Posterior cingulate gyrus (tissue), 11 donors: ENCODE measurements at regions of chr7 and their contacts with region 1.

Region 1: DNA sequence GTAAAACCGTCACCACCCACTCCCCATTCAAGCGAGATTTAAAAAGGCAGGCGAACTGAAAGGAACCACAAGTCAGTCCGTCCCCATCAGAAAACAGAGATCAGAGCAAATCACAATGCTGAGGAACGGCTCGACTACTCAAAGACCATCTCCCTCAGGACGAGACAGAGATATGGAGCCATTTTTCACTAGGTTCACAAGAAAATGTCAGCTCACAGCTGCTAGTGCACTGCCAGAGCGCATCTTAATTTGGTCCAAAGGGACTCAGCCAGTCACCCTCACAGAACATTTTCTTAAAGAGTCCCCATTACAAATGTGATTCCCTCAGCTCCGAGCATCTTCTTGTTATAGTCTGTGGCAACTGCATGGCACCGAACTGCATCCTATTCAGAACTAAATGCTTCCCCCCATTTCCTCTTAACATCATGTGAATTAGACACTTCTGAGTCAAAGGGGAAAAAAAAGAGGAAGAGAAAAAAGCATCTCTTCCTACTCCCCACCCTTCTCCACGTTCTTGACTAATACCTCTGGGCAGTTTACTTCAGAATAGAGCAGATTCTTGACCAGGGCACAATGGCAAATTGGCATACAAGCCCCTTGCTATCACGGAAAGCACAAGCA is 683.9 kb downstream of the MAGI2 start:
- DNase-seq: peak in 4 of 10 donors; percentile 6 to 57 (median 18)

Region 2: GRCh38 chr7:78510580-78511188 is 258.9 kb before region 1 on chr7:
- intact Hi-C with region 1: loop called (anchors 10 kb)
- DNase-seq: peak in 6 of 10 donors; percentile 29 to 91 (median 49)

Region 3: GRCh38 chr7:78558566-78558965 is 211.0 kb before region 1 on chr7:
- intact Hi-C with region 1: loop called (anchors 10 kb)
- DNase-seq: peak in 1 of 10 donors; percentile 41

Region 4: DNA sequence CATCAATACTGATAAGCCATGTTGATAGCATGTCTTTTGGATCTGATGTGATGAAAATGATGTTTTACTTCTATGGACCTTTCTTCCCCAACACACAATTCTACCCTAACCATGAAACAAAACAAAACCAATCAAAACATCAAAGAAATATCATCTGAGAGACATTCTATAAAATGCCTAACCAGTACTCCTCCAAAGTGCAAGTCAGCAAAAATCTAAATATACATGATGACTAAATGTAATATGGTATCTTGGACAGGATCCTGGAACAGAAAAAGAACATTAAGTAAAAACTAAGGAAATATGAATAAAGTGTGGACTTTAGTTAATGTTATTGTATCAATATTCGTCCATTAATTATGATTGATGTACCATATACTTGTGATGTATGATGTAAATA is 58.7 kb after region 1 on chr7:
- intact Hi-C with region 1: no loop called
- DNase-seq: no peak

Region 5: DNA sequence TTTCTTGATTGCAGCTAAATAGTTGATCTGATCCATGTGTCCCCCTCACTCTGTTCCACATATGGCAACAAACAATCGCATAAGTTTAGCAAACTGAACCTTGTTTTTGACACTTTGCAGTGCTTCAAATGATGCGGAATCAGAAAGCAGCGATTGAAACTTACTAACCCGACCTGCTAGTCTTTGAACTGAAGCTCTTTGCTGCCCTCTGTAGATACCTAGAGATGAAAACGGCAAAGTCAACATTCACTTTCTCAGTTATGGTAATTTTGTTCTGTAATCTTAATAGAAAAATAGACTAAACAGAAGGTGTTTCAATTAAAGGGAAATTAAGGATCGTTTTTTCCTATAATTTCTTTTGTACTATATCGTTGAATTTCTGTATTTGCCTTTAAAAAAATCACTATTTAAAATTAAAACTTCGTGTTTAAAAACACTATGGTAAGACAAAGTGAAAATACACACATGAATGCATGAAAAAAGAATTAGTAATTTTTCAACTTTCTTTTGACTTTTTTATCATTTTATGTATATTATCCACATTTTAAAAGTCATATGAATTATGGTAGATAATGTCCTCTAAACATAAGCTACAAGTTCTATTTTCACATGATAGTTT is 407.4 kb after region 1 on chr7:
- intact Hi-C with region 1: loop called (anchors 10 kb)
- DNase-seq: peak in 1 of 10 donors; percentile 13